CD8-positive, alpha-beta T cell (primary cell): ENCODE measurements at regions of chr5 and their contacts with region 1.

Region 1: GRCh38 chr5:154940772-154941620 is at the start of gene MRPL22:
- DNase-seq: peak; percentile 89 to 97 (median 95)
- ATAC-seq: peak; percentile 70
- H3K4me3 ChIP-seq: peak within 1 kb of the TSS; percentile 82 to 92
- H3K4me3 Mint-ChIP-seq: peak within 1 kb of the TSS; percentile 100
- H3K27ac ChIP-seq: peak within 1 kb of the TSS; percentile 73 to 80
- H3K27ac Mint-ChIP-seq: peak within 1 kb of the TSS; percentile 98
- H3K4me1 ChIP-seq: peaks cover 36% of the 10 kb centered on the region
- H3K4me1 Mint-ChIP-seq: peaks cover 53% of the 10 kb centered on the region
- H3K27me3 ChIP-seq: no peaks in the 10 kb centered on the region
- H3K27me3 Mint-ChIP-seq: no peaks in the 10 kb centered on the region
- CTCF ChIP-seq: no peak
- total RNA-seq, gene MRPL22: 42.2 TPM

Region 2: GRCh38 chr5:154038707-154039457 is 902.1 kb before region 1 on chr5 and contains the starts of genes FAM114A2 and MFAP3:
- CTCF ChIA-PET with region 1: no interaction called
- POLR2A ChIA-PET with region 1: no interaction called
- intact Hi-C with region 1: loop called (anchors 2 to 5 kb)
- DNase-seq: peak; percentile 77 to 93 (median 88)
- ATAC-seq: peak; percentile 97
- H3K4me3 ChIP-seq: peak within 1 kb of the TSS; percentile 72 to 91
- H3K4me3 Mint-ChIP-seq: peak within 1 kb of the TSS; percentile 95
- H3K27ac ChIP-seq: peak within 1 kb of the TSS; percentile 84 to 95
- H3K27ac Mint-ChIP-seq: peak within 1 kb of the TSS; percentile 98
- H3K4me1 ChIP-seq: peaks cover 25% of the 10 kb centered on the region
- H3K4me1 Mint-ChIP-seq: peaks cover 76% of the 10 kb centered on the region
- H3K27me3 ChIP-seq: no peaks in the 10 kb centered on the region
- H3K27me3 Mint-ChIP-seq: no peaks in the 10 kb centered on the region
- CTCF ChIP-seq: no peak
- total RNA-seq, gene FAM114A2: 24.9 to 26.6 TPM
- total RNA-seq, gene MFAP3: 16.6 to 20.2 TPM

Region 3: DNA sequence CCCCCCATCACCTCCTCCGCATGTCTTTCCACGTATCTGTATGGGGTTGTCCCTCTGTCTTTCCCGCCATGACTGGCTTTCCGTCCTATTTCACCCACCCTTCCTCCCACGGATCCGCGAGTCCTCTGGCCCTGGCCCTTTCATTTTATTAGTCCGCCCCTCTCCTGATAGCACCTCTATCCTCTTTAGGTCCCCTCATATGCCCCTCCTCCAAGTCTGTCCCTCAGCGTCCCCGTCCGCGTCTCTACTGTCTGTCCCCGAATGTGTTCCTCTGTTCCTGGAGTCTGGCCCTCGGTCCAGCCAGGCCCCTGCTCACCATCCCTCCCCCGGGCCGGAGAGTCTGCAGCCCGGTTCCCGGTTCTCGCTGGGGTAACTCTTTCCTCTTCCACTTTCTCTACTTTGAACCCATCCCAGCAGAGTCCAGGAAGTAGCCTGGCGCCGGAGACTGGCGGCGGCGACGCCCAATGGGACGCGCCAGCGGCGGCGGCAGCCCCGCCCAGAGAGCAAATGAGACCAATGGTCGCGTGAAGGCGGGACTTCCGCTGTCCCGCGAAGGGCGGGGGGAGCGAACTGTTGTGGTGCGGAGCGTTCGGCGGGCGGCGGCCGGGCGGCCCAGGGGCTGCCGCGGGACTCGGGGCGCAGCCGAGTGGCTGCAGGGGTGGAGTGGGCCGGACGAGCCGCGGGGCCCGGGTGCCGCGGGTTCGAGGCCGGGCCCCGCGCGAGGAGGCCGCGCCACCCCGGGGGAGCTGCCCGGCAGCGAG is 495.4 kb before region 1 on chr5 and contains the start of gene SAP30L:
- CTCF ChIA-PET with region 1: no interaction called
- POLR2A ChIA-PET with region 1: no interaction called
- intact Hi-C with region 1: loop called (anchors 1 to 5 kb)
- DNase-seq: peak; percentile 92 to 98 (median 95)
- ATAC-seq: peak; percentile 93
- H3K4me3 ChIP-seq: peak within 1 kb of the TSS; percentile 98 to 100
- H3K4me3 Mint-ChIP-seq: peak within 1 kb of the TSS; percentile 98
- H3K27ac ChIP-seq: peak within 1 kb of the TSS; percentile 77 to 79
- H3K27ac Mint-ChIP-seq: peak within 1 kb of the TSS; percentile 96
- H3K4me1 ChIP-seq: peaks cover 40% of the 10 kb centered on the region
- H3K4me1 Mint-ChIP-seq: peaks cover 64% of the 10 kb centered on the region
- H3K27me3 ChIP-seq: no peaks in the 10 kb centered on the region
- H3K27me3 Mint-ChIP-seq: no peaks in the 10 kb centered on the region
- CTCF ChIP-seq: no peak
- total RNA-seq, gene SAP30L: 24.1 to 25.4 TPM

Region 4: DNA sequence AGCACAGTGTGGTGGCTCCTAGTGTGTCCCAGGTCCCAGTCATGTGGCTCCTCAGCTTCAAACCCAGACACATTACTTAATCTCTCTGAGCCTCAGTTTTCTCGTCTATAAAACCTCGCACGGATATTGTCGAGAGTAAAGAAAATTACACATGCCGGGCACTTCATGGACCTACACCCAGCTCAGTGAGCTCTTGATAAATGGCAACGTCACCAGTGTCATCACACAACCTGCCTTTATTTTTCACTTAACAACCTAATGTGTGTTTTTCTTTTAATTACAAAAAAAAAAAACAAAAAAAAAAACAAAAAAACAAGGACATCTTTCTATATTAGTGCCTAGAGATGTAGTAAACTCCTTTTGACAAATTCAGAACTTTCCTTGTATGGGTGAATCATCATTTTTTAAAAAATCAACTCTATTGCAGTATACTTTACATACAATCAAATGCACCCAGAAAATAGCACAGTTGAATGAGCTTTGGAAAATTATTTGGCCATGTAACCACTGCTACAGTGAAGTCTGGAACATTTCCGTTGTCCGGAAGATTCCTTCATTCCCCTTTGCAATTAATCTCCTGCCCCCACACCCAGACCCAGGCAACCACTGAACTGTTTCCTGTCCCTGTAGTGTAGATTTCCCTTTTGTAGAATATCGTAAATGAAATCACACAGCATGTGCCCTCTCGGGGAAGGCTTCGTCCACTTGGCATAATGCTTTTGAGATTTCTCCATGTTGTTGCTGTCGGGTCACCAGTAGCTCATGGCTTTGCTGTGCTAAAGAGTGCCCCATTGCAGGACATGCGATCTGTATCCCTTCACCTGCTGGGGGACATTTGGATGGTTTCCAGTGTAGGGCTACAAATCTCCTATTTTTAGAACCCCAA is 286.3 kb before region 1 on chr5:
- CTCF ChIA-PET with region 1: interaction called, 6 read pairs
- POLR2A ChIA-PET with region 1: no interaction called
- intact Hi-C with region 1: loop called in 1 of 2 experiments (anchors 5 kb)
- DNase-seq: no peak
- ATAC-seq: no peak
- H3K4me3 ChIP-seq: no peak overlapping the region
- H3K4me3 Mint-ChIP-seq: no peak overlapping the region
- H3K27ac ChIP-seq: no peak overlapping the region
- H3K27ac Mint-ChIP-seq: no peak overlapping the region
- H3K4me1 ChIP-seq: peaks cover 8% of the 10 kb centered on the region
- H3K4me1 Mint-ChIP-seq: peaks cover 9% of the 10 kb centered on the region
- H3K27me3 ChIP-seq: no peaks in the 10 kb centered on the region
- H3K27me3 Mint-ChIP-seq: no peaks in the 10 kb centered on the region
- CTCF ChIP-seq: no peak